Sciatic nerve (tissue), 2 donors: ENCODE measurements at regions of chr17 and their contacts with region 1.

Region 1: DNA sequence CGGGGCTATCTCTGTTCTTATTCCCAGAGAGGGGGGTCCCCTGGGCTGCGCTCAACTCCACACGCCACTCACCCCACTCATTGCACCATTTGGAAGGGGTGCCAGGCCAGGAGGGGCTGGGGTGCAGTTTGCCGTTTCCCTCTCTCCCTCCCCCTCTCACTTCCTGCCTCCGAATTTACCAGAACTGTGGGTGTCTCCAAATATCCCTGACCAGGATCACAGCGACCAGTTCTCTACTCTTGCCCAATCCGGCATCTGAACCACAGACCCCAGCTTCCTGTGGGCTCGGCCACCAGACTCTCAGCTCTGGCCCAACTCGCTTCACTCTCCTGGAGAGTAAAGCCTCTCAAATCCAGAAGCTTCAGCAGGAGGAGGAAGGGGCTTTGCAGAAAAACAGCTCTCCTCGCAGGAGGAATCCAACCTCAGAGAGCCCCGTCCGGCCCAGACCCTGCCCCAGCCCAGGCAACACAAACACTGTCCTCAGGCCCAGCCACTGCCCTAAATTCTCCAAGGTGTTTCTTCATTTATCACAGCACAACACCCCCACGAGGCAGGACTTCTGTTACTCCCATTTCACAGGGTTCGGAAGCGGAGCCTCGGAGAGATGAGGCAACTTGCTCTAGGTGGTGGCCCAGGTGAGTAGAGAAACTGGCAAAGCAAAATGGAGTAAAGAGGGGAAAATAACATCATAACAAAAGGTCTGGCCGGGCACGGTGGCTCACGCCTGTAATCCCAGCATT is 423 bp upstream of the ASGR2 start:
- DNase-seq: no peak
- ATAC-seq: peak; percentile 65

Region 2: GRCh38 chr17:5254903-5255526 is 1860.0 kb before region 1 on chr17:
- intact Hi-C with region 1: loop called (anchors 5 kb)
- DNase-seq: no peak
- ATAC-seq: peak; percentile 65

Region 3: DNA sequence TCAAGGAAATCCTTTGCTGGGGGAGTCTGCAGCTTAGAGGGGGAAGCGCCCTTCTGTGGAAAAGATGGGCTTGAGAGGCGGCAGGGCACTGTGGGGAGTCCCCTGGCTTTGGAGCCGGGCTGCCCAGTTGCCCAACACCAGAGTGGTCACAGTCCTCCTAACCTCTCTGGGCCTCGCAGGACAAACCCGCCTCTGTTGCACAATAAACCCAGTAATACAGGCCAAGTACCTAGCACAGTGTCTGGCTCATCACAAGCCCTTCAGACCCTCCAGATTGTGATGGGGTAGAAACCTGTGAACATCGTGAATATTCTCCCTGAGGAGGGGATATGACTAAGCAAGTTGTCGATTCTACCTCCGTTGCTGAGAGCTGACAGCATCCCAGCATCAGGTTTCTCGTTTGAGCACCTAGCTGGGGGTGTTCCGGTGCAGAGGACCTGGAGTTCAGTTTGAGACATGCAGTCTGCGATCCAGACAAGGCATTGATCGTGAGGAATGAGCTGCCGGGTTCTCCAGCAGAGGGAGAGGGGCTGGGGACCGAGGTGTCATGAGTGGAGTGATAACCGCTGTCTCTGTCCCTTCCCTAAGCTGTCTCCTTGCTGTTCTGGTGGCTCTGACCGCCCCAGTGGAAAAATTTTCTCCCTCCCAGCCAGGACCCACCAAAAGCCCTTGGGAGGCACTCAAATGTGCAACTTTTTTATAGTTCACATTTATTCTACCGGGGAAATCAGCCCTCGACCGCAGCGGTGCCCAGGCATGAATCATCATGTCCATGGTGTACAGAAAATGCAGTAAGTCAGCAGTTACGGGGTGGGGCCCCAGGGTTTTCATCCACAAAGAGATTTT is 882.9 kb before region 1 on chr17:
- intact Hi-C with region 1: loop called (anchors 5 kb)
- DNase-seq: no peak
- ATAC-seq: no peak